Sciatic nerve (tissue), 2 donors: ENCODE measurements at regions of chr4 and their contacts with region 1.

Region 1: DNA sequence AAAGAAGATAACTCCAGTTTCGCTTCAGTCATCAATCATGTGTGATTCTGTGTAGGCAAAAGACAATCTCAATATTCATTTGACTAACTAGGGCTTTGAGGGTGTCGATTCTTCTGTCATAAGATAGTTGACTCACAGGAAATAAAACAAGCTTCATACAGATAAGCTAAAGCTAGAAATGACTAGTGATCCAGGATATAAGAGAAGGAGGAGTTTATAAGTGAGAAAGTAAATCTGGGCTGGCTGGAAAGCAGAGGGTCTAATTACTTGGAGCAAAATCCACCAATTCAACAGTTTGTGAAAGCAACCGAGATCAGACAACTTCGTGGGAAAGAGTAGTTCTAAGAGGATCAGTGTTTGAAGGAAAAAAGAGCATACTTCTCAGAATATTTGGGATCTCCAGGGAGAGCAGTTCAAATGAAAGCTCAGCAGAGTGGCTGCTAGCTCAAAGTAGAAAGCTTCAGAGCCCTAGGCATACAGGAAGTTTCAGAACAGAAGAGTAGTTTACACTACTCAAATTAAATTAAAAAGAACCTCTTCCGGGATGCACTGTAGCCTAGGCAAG is 429.3 kb downstream of the INPP4B start:
- DNase-seq: no peak
- ATAC-seq: peak; percentile 30

Region 2: GRCh38 chr4:142168181-142168580 is 248.6 kb before region 1 on chr4:
- intact Hi-C with region 1: loop called (anchors 5 kb)
- DNase-seq: no peak
- ATAC-seq: no peak

Region 3: DNA sequence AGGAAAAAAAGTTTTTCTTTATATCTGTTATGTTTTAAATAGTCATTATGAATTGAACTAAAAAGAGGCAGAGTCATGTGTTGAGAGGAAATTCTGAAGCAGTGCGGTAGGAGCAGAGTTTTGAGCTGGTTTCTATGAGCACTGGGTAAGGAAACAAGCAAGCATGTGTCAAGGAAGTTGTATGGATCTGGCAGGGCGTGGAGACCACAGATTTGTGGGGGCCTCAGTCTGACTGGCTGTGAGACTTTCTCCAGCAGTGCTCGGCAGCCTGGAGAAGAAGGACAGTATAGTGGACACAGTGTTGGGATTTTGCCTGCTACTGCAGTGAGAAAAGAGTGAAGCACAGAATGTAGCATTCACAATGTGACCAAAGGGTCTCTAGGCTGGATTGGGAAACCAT is 30.2 kb after region 1 on chr4:
- intact Hi-C with region 1: loop called (anchors 1 kb)
- DNase-seq: no peak
- ATAC-seq: no peak

Region 4: GRCh38 chr4:142474335-142475087 is 57.7 kb after region 1 on chr4:
- intact Hi-C with region 1: no loop called
- DNase-seq: no peak
- ATAC-seq: peak; percentile 26